CD4-positive, alpha-beta memory T cell (primary cell): ENCODE measurements at regions of chr5 and their contacts with region 1.

Region 1: GRCh38 chr5:151115274-151115905 is 34.6 kb upstream of the TNIP1 start:
- DNase-seq: peak; percentile 62 to 73 (median 65)
- H3K4me3 ChIP-seq: no peak overlapping the region
- H3K4me3 Mint-ChIP-seq: no peak overlapping the region
- H3K27ac ChIP-seq: peak overlapping the region; percentile 8
- H3K27ac Mint-ChIP-seq: peak overlapping the region in 2 of 7 donors; percentile 36 to 60
- H3K4me1 ChIP-seq: peaks cover 11% of the 10 kb centered on the region
- H3K4me1 Mint-ChIP-seq: peaks cover 0 to 13% (median 7%) of the 10 kb centered on the region in 4 donors
- H3K27me3 ChIP-seq: no peaks in the 10 kb centered on the region
- H3K27me3 Mint-ChIP-seq: no peaks in the 10 kb centered on the region

Region 2: DNA sequence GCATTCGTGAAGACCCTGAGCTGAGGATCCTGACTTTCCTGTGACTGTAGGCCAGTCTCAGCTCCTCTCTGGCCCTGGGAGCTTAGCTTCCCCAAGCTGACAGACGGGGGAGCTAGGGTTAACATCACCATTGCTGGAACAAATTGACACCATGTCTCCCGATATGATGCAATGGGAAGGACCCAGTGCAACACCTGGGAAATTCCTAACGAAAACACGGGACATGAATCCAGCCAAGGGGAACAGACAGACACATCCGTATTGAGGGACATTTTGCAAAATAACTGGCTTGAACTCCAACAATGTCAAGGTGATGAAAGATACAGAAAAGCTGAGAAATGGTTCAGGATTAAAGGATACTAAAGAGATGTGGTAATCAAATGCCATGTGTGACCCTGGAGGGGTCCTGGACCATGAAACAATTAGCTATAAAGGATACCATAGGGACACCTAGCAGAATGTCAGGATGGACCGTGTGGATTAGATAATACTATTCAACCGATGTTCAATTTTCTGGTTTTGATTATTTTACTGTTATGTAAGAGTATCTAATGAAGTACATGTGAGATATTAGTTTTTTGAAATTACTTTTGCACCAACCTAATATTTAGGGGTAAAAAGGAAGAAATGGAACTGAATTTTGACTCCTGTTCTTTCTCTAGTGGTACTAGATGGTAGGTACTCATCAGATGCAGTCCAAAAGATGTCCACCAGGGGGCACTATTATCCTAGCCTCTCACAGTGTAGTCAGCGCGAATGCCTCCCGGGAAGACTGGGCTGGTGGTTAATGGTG is 554.8 kb before region 1 on chr5:
- CTCF ChIA-PET with region 1: interaction called, 13 read pairs
- POLR2A ChIA-PET with region 1: no interaction called
- intact Hi-C with region 1: no loop called
- DNase-seq: peak; percentile 73 to 82 (median 79)
- H3K4me3 ChIP-seq: no peak overlapping the region
- H3K4me3 Mint-ChIP-seq: no peak overlapping the region
- H3K27ac ChIP-seq: no peak overlapping the region
- H3K27ac Mint-ChIP-seq: no peak overlapping the region
- H3K4me1 ChIP-seq: no peaks in the 10 kb centered on the region
- H3K4me1 Mint-ChIP-seq: peaks cover 0 to 1% (median under 1%) of the 10 kb centered on the region in 4 donors
- H3K27me3 ChIP-seq: no peaks in the 10 kb centered on the region
- H3K27me3 Mint-ChIP-seq: peaks cover 0 to 3% of the 10 kb centered on the region in 2 donors

Region 3: GRCh38 chr5:151034422-151035379 is 80.7 kb before region 1 on chr5:
- CTCF ChIA-PET with region 1: interaction called, 18 read pairs
- POLR2A ChIA-PET with region 1: no interaction called
- intact Hi-C with region 1: no loop called
- DNase-seq: no peak
- H3K4me3 ChIP-seq: no peak overlapping the region
- H3K4me3 Mint-ChIP-seq: no peak overlapping the region
- H3K27ac ChIP-seq: no peak overlapping the region
- H3K27ac Mint-ChIP-seq: peak overlapping the region in 3 of 7 donors; percentile 36 to 83 (median 74)
- H3K4me1 ChIP-seq: no peaks in the 10 kb centered on the region
- H3K4me1 Mint-ChIP-seq: no peaks in the 10 kb centered on the region
- H3K27me3 ChIP-seq: no peaks in the 10 kb centered on the region
- H3K27me3 Mint-ChIP-seq: no peaks in the 10 kb centered on the region

Region 4: GRCh38 chr5:151068433-151069197 is 46.8 kb before region 1 on chr5:
- CTCF ChIA-PET with region 1: interaction called, 54 read pairs
- POLR2A ChIA-PET with region 1: interaction called, 4 read pairs
- intact Hi-C with region 1: no loop called
- DNase-seq: peak in 1 of 5 donors; percentile 10
- H3K4me3 ChIP-seq: no peak overlapping the region
- H3K4me3 Mint-ChIP-seq: peak overlapping the region in 7 of 8 donors; percentile 12 to 61 (median 52)
- H3K27ac ChIP-seq: peak overlapping the region; percentile 29
- H3K27ac Mint-ChIP-seq: peak overlapping the region; percentile 25 to 87 (median 81)
- H3K4me1 ChIP-seq: peaks cover 85% of the 10 kb centered on the region
- H3K4me1 Mint-ChIP-seq: peaks cover 60 to 86% (median 74%) of the 10 kb centered on the region in 4 donors
- H3K27me3 ChIP-seq: no peaks in the 10 kb centered on the region
- H3K27me3 Mint-ChIP-seq: no peaks in the 10 kb centered on the region

Region 5: DNA sequence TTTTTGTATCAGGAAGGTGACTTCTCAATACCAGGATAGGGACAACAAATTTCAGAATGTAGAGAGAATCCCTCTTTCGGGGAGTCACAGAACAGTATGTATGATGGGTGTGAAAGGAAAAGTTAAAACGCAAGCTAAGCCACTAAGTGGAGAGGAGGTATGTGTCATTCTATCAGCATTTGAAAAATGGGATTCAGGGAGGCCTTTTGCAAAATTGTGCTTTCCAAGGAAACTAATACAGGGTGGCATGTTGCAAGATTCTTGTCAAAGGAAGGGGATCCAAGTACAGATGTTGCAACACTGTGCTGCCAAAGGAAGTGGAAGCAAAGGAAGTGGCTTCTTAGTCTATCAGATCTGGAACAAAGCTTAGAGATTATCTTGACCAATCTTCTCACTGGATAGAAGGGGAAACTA is 21.9 kb before region 1 on chr5:
- CTCF ChIA-PET with region 1: interaction called, 63 read pairs
- POLR2A ChIA-PET with region 1: interaction called, 7 read pairs
- intact Hi-C with region 1: loop called (anchors 2 kb)
- DNase-seq: no peak
- H3K4me3 ChIP-seq: no peak overlapping the region
- H3K4me3 Mint-ChIP-seq: peak overlapping the region in 7 of 8 donors; percentile 48 to 84 (median 81)
- H3K27ac ChIP-seq: peak overlapping the region; percentile 58
- H3K27ac Mint-ChIP-seq: peak overlapping the region; percentile 87 to 96 (median 93)
- H3K4me1 ChIP-seq: peaks cover 47% of the 10 kb centered on the region
- H3K4me1 Mint-ChIP-seq: peaks cover 42 to 72% (median 54%) of the 10 kb centered on the region in 4 donors
- H3K27me3 ChIP-seq: no peaks in the 10 kb centered on the region
- H3K27me3 Mint-ChIP-seq: no peaks in the 10 kb centered on the region

Region 6: GRCh38 chr5:151164686-151165392 is 49.4 kb after region 1 on chr5:
- CTCF ChIA-PET with region 1: interaction called, 2,066 read pairs
- POLR2A ChIA-PET with region 1: interaction called, 10 read pairs
- intact Hi-C with region 1: no loop called
- DNase-seq: peak; percentile 78 to 84 (median 81)
- H3K4me3 ChIP-seq: no peak overlapping the region
- H3K4me3 Mint-ChIP-seq: peak overlapping the region in 1 of 8 donors; percentile 4
- H3K27ac ChIP-seq: no peak overlapping the region
- H3K27ac Mint-ChIP-seq: peak overlapping the region in 5 of 7 donors; percentile 10 to 75 (median 52)
- H3K4me1 ChIP-seq: no peaks in the 10 kb centered on the region
- H3K4me1 Mint-ChIP-seq: peaks cover 14 to 22% (median 19%) of the 10 kb centered on the region in 4 donors
- H3K27me3 ChIP-seq: no peaks in the 10 kb centered on the region
- H3K27me3 Mint-ChIP-seq: no peaks in the 10 kb centered on the region

Region 7: DNA sequence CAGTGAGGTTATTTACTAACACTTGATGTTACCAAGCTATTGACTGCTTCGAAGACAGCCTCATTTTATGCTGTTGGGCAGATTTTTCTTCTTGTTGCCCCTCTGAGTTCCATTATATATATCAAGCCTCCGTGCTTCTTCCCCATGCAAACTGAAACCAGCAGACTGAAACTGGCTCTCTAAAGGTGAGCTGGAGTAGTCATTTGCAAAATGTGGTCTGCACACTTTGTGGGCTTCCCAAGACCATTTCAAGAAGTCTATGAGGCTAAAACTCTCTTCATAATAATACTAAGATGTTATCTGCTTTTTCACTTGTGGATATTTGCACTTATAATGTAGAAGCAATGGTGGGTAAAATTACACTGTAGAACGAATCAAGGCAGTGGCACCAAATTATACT is 345.9 kb after region 1 on chr5:
- CTCF ChIA-PET with region 1: no interaction called
- POLR2A ChIA-PET with region 1: no interaction called
- intact Hi-C with region 1: no loop called
- DNase-seq: no peak
- H3K4me3 ChIP-seq: no peak overlapping the region
- H3K4me3 Mint-ChIP-seq: no peak overlapping the region
- H3K27ac ChIP-seq: no peak overlapping the region
- H3K27ac Mint-ChIP-seq: no peak overlapping the region
- H3K4me1 ChIP-seq: no peaks in the 10 kb centered on the region
- H3K4me1 Mint-ChIP-seq: no peaks in the 10 kb centered on the region
- H3K27me3 ChIP-seq: no peaks in the 10 kb centered on the region
- H3K27me3 Mint-ChIP-seq: no peaks in the 10 kb centered on the region